ENCODE measurements at regions of chr4 and their contacts with region 1.

Region 1: DNA sequence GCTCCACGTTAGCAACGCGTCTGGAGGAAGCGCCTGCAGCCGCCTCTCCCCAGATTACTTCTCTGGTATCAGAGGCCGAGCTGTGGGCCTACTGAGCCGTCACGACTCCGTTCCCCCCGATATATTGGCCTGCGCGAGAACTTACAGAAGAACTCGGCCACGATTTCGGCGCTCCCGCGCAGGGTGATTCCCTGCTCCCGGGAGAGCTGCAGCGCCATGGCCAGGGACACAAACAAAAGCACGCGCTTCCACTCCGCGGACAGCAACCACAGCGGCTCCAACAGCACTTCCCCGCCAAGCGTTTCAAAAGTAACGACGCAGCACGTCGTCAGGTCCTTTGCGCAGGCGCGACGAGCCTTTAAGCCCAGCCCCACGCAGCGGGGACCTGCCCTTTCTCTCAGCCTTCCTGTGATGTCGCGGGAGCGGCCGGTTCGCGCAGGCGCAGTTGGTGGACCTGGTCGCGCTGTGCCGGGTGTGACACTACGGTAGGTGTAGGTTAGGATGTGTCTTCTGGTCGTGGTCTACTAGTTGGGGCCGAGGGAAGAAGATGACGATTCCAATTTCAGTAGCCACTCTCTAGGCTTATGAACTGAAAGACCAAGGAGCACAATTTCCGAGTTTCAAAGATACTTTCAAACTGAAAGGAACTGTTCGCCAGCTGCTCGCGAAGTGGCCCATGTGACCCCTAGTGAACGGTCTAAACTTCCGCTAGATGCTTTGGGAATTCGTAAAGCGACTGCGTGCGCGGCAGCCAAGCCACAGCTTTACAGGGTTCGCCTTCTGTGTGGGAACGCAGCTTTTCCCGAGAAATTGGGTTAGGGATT is at the start of gene MAD2L1:
- DNase-seq: peak; percentile 98
- H3K4me3 Mint-ChIP-seq: peak within 1 kb of the TSS; percentile 91
- H3K27ac Mint-ChIP-seq: peak within 1 kb of the TSS; percentile 97
- H3K4me1 Mint-ChIP-seq: peaks cover 55% of the 10 kb centered on the region
- H3K27me3 Mint-ChIP-seq: no peaks in the 10 kb centered on the region
- total RNA-seq, gene MAD2L1: 116 to 127 TPM

Region 2: GRCh38 chr4:119628308-119629141 is 438.2 kb before region 1 on chr4 and contains the start of gene PDE5A:
- CTCF ChIA-PET with region 1: no interaction called
- intact Hi-C with region 1: loop called (anchors 1 kb)
- DNase-seq: peak; percentile 83
- H3K4me3 Mint-ChIP-seq: peak within 1 kb of the TSS; percentile 78
- H3K27ac Mint-ChIP-seq: no peak within 1 kb of the TSS
- H3K4me1 Mint-ChIP-seq: peaks cover 15% of the 10 kb centered on the region
- H3K27me3 Mint-ChIP-seq: peaks cover 11% of the 10 kb centered on the region
- total RNA-seq, gene PDE5A: 0.41 to 0.44 TPM

Region 3: DNA sequence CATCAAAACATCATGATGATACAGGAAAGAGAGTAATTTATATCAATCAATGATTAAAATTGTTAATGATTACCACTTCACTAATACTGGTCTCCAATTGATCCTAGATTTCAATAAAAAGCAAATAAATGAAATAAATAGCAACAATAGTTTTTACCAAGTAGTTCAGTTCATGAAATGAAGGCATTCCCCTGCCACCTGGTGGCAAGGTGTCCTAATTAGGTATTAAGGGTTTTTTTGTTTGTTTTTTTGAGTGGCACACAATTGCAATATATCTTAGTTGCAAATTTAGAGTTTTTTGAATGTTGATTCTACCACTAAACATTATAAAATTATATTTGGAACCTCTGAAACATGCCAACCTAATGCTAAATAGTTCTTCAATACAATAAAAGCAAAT is 280.8 kb before region 1 on chr4:
- CTCF ChIA-PET with region 1: no interaction called
- intact Hi-C with region 1: no loop called
- DNase-seq: peak; percentile 9
- H3K4me3 Mint-ChIP-seq: no peak overlapping the region
- H3K27ac Mint-ChIP-seq: no peak overlapping the region
- H3K4me1 Mint-ChIP-seq: no peaks in the 10 kb centered on the region
- H3K27me3 Mint-ChIP-seq: peaks cover 9% of the 10 kb centered on the region

Region 4: DNA sequence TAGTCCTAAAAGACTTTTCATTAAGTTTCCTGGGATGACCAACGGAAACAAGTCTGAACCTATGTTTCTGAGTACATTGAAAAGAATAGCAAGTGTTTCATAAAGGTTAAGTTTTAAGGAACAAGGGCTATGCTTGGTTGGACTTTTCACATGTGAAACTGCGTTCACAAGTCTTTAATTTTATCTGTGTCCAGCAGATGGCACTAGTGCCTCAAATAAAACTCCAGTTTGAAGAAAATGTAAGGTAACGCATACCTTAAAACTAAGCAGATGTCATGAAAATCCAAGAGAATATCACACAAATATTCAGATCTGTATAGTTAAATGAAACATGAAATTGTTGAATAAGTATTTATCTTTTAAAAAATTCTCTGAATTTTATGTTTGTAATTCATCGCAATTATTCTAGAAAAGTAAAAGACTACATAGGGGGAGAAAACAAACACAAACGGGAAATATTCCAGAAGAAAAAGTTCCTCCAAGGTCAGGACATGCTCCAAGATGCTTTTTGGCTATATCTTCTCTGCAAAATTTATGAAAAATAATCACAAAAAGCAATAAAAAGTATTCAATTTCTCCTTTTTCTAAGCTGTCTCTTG is 89.5 kb after region 1 on chr4:
- CTCF ChIA-PET with region 1: no interaction called
- intact Hi-C with region 1: loop called (anchors 1 kb)
- DNase-seq: peak; percentile 32
- H3K4me3 Mint-ChIP-seq: no peak overlapping the region
- H3K27ac Mint-ChIP-seq: no peak overlapping the region
- H3K4me1 Mint-ChIP-seq: no peaks in the 10 kb centered on the region
- H3K27me3 Mint-ChIP-seq: no peaks in the 10 kb centered on the region

Region 5: GRCh38 chr4:120922381-120923206 is 855.9 kb after region 1 on chr4 and contains the start of gene PRDM5:
- CTCF ChIA-PET with region 1: no interaction called
- intact Hi-C with region 1: loop called (anchors 1 kb)
- DNase-seq: peak; percentile 40
- H3K4me3 Mint-ChIP-seq: peak within 1 kb of the TSS; percentile 73
- H3K27ac Mint-ChIP-seq: peak within 1 kb of the TSS; percentile 54
- H3K4me1 Mint-ChIP-seq: peaks cover 13% of the 10 kb centered on the region
- H3K27me3 Mint-ChIP-seq: peaks cover 4% of the 10 kb centered on the region
- total RNA-seq, gene PRDM5: 0.20 to 0.57 TPM

Region 6: GRCh38 chr4:121096629-121097028 is 1029.9 kb after region 1 on chr4:
- CTCF ChIA-PET with region 1: no interaction called
- intact Hi-C with region 1: loop called (anchors 1 kb)
- DNase-seq: no peak
- H3K4me3 Mint-ChIP-seq: no peak overlapping the region
- H3K27ac Mint-ChIP-seq: no peak overlapping the region
- H3K4me1 Mint-ChIP-seq: no peaks in the 10 kb centered on the region
- H3K27me3 Mint-ChIP-seq: no peaks in the 10 kb centered on the region

Region 7: DNA sequence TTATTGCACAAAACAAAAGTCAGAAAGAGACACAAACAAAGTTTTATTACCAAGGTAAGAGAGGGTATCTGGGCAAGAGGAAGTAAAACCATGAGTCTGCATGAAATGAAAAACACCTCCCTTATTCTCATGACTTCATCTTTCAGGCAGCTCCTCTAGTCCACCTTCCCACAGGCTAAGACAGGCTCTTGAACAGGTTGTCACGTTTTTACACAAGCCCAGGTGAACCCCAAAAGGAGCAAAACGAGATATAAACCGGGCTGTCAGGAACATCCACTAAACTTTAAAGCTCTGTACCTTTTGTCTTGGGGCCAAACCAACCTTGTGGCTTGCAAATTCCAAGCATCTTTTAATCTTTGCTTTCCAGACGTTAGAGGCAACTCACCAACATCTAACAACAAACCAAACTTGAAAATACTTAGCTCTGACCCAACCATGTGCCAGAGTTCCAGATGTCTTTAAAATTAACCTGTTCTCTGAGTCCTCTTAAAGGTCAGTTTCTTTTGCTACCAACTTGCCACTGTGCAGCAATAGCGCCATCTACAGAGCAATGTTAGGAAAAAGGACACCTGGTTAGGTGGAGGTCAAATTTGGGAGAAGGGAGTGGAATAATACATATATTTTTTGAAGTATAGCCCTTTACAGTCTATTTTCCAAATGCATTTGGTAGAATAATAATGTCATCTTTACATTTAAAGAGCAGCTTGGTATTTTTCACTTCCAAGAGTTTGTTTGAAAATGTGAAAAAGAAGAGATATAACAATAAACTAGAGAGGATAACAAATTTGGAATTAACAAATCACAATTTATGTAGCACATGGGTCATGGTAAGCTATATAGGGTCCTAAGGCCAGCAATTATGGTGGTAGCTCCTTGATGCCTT is 1241.0 kb after region 1 on chr4:
- CTCF ChIA-PET with region 1: no interaction called
- intact Hi-C with region 1: loop called (anchors 5 kb)
- DNase-seq: peak; percentile 71
- H3K4me3 Mint-ChIP-seq: no peak overlapping the region
- H3K27ac Mint-ChIP-seq: no peak overlapping the region
- H3K4me1 Mint-ChIP-seq: peaks cover 15% of the 10 kb centered on the region
- H3K27me3 Mint-ChIP-seq: no peaks in the 10 kb centered on the region

Measured in activated naive CD4-positive, alpha-beta T cell treated with anti-CD3 and anti-CD28 coated beads for 36 hours (primary cell).